ENCODE measurements at regions of chr13 and their contacts with region 1.

Region 1: DNA sequence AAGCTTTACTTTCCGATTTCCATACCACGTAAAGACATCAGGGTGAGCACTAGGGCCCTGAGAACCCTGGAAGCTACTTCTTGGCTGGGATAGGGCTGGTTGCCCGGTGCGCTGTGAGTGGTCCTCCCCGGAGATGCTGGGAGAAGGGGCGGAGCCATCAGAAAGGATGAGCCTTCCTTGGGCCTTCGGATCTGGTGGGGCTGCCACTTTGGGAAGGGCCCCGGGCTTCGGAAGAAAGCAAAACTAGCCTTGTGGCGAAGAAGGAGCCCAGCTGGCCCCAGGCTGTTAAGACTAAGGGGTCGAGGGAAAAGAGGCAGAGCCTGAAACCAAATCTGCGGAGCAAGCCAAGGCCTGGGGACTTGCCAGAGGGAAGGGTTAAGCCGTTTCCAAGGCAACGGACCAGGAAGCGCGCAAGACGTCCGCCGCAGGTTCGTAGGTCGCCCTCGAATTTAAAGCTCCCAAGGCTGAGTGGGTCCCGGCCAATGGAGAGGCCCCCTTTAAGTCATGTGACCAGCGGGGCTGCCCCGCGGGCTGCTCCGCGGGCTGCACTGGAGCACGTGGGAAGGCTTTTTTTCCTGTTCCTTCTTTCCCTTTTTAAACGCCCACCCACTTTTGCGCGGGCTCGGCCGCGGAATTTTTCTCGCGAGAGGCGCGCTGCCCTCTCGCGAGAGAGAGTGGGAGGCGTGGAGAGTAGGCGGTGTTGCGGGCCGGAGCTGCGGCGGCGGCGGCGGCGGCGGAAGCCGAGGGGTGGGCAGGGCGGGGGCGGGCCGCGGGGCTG is 426 bp upstream of the AKAP11 start:
- DNase-seq: peak; percentile 92
- H3K4me3 Mint-ChIP-seq: peak overlapping the region; percentile 92
- H3K27ac Mint-ChIP-seq: peak overlapping the region; percentile 97
- H3K4me1 Mint-ChIP-seq: peaks cover 56% of the 10 kb centered on the region
- H3K27me3 Mint-ChIP-seq: peaks cover 7% of the 10 kb centered on the region

Region 2: DNA sequence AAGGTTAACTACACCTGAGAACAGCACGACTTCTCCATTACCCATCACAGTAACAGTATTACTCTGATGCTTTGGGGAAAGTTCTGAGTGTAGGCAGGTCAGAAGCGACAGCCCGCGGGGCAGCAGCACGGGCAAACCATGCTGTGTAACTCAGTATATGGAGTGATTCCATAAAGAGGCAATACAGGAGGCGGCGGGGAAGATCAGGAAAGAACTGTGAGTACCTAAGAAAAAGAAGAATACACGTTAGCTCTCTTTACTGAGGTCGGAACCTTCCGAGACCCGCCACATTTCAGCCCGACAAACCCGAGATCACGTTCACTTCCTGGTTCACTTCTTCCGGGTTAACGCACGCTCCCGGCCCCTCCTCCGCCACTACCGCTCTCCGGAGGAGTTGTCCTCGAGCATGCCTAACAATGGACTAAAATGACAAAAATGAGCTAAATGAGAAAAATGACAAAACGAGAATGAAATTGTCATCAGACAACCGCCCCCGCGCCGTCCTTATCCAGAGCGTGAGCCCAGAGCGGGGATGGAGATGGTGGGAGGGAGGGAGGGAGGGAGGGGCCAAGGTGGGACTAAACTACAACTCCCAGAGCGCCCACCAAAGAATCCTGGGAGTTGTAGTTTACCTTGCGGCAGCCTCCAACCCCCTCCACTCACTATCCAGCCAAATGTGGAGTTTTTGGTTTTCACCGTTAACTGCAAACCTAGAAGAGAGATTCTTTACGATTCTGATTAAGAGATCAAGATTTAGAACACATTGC is 1008.1 kb before region 1 on chr13 and contains the start of gene MTRF1:
- intact Hi-C with region 1: loop called (anchors 2 kb)
- DNase-seq: peak; percentile 72
- H3K4me3 Mint-ChIP-seq: peak within 1 kb of the TSS; percentile 95
- H3K27ac Mint-ChIP-seq: peak within 1 kb of the TSS; percentile 100
- H3K4me1 Mint-ChIP-seq: peaks cover 12% of the 10 kb centered on the region
- H3K27me3 Mint-ChIP-seq: no peaks in the 10 kb centered on the region
- total RNA-seq, gene MTRF1: 17.5 and 20.2 TPM in 2 replicates

Region 3: DNA sequence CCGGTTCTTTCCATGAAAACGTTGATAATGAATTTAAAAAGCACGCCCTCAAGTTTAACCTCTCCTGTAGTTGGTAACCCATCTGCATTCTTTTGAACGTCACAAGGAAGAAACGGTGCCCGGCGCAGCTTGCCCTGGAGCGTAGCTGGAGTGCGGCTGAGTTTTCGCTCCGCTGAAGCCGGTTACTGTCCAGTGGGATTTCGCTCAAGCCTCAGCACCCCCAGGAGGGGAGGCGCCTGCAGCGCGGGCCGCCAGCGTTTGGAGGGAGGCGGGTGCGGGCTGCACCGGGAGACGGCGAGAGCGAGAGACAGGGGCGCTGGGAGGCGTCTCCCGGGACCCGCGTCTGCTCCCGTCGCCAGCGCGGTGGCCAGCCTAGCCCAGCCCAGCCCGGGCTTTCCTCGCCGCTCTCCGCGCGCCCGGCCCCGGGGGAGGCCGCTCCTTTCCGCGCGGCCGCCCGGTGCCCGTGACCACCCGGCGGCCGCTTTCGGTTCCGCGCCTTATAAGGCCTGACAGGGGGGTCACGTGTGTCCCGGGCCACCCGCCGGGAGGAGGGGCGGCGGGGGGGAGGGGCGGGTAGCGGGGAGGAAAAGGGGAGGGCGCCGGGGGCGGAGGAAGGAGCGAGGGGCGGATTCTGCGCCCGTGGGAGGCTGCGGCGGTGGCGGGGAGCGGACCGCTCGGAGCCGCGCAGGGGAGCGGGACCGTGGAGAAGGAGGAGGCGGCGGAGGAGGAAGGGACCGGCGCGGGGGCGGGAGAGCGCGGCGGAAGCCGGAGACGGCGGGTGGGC is 231.4 kb before region 1 on chr13:
- intact Hi-C with region 1: loop called (anchors 5 kb)
- DNase-seq: peak; percentile 80
- H3K4me3 Mint-ChIP-seq: peak overlapping the region; percentile 87
- H3K27ac Mint-ChIP-seq: peak overlapping the region; percentile 56
- H3K4me1 Mint-ChIP-seq: peaks cover 17% of the 10 kb centered on the region
- H3K27me3 Mint-ChIP-seq: peaks cover 44% of the 10 kb centered on the region

Region 4: GRCh38 chr13:42377640-42378382 is 106.3 kb after region 1 on chr13:
- intact Hi-C with region 1: loop called (anchors 1 kb)
- DNase-seq: peak; percentile 68
- H3K4me3 Mint-ChIP-seq: peak overlapping the region; percentile 38
- H3K27ac Mint-ChIP-seq: peak overlapping the region; percentile 89
- H3K4me1 Mint-ChIP-seq: peaks cover 82% of the 10 kb centered on the region
- H3K27me3 Mint-ChIP-seq: no peaks in the 10 kb centered on the region

Region 5: GRCh38 chr13:42478531-42479156 is 207.1 kb after region 1 on chr13:
- intact Hi-C with region 1: loop called (anchors 5 kb)
- DNase-seq: no peak
- H3K4me3 Mint-ChIP-seq: no peak overlapping the region
- H3K27ac Mint-ChIP-seq: no peak overlapping the region
- H3K4me1 Mint-ChIP-seq: peaks cover 24% of the 10 kb centered on the region
- H3K27me3 Mint-ChIP-seq: no peaks in the 10 kb centered on the region

Region 6: DNA sequence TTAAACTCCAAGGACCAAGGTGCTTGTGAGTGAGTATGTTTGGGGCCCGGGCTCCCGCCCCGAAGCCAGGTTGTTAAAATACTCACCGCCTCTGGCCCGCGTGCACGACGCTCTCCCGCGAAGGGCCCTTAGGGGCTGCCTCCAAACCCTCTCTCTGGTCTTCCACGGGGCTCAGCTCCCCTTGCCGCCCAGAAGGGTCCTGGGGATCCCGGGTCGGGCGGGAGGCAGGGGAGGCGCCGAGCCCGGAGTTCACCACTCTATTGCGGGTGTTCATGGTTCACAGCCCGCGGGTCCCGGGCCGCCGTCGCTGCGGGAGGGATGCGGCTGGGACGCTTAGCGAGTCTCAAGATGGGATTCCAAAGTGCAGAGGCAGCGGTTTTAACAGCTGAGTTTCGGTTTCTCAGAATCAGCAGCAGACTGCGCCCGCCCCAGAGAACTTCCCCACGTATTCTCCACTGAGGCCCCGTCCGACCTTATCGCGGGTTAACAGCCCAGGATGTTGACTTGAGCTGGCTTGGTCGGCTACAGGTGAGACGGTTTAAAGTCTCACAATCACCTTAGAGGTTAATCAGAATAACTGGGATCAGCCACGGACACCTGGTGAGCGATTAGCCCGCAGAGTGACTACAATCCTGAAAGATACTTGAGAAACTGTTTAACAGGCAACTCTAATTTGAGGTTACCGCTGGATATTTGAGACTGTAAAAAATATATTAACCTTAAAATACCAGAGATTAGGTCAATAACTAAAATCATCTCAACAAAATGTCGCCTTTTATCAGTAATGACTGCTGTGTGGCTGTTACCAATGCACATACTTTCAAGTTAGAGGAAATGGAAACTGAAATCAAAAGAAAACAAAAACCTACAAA is 720.6 kb after region 1 on chr13 and contains the start of gene EPSTI1:
- intact Hi-C with region 1: loop called (anchors 2 kb)
- DNase-seq: peak; percentile 80
- H3K4me3 Mint-ChIP-seq: peak within 1 kb of the TSS; percentile 95
- H3K27ac Mint-ChIP-seq: peak within 1 kb of the TSS; percentile 97
- H3K4me1 Mint-ChIP-seq: peaks cover 76% of the 10 kb centered on the region
- H3K27me3 Mint-ChIP-seq: no peaks in the 10 kb centered on the region
- total RNA-seq, gene EPSTI1: 18.6 and 19.3 TPM in 2 replicates

Measured in activated T-helper 1 cell treated with anti-CD3 and anti-CD28 coated beads, Interleukin-12 subunit alpha, Interleukin-12 subunit beta, Interleukin-2, Interleukin-4 antibody, amounts not matched to agents 30 ng/mL and 10 ng/mL and 1 ng/mL, durations not matched to agents 14 hours and 24 hours and 36 hours (primary cell).